Cardiac septum (tissue), 1 donor: ENCODE measurements at regions of chr17 and their contacts with region 1.

Region 1: DNA sequence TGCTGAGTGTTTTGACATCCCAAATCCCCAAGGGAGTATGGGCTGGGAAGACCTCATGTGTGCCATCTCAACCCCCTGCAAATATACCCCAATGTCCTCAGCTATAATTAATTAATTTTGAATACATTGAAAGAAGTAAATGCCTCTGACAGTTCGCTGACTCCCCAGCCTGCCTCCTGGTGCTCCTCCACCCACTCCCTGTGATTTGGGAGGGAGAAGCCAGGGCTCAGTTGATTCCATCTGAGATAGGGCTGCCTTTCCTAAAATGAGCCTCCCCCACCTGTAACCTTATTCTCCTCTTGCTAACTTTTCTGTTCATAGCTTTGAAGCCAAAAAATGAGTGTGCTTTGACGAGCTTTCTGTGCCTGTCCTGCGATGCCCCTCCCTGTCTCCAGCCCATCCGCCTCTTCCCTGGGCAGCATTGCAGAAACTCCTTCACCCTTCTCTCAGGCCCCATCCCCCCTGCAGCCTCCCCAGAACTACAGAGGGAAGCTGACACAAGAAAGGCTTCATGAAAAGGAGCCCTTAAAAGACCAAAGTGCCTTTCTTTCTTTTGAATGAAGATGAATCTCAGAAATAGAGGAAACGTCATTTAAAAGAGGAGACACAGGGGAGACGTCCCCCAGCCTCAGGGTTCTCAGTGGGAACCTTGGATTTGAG is 70.3 kb downstream of the HLF start:
- DNase-seq: no peak

Region 2: GRCh38 chr17:55303701-55304145 is 31.3 kb before region 1 on chr17:
- intact Hi-C with region 1: loop called (anchors 5 kb)
- DNase-seq: no peak

Region 3: GRCh38 chr17:55402374-55402773 is 67.4 kb after region 1 on chr17:
- intact Hi-C with region 1: no loop called
- DNase-seq: no peak

Region 4: GRCh38 chr17:55452139-55452790 is 117.3 kb after region 1 on chr17:
- intact Hi-C with region 1: no loop called
- DNase-seq: no peak